Left ventricle myocardium superior (tissue), 1 donor: ENCODE measurements at regions of chr6 and their contacts with region 1.

Region 1: GRCh38 chr6:47413752-47414422 is 63.7 kb upstream of the CD2AP start:
- DNase-seq: no peak
- ATAC-seq: peak; percentile 87

Region 2: DNA sequence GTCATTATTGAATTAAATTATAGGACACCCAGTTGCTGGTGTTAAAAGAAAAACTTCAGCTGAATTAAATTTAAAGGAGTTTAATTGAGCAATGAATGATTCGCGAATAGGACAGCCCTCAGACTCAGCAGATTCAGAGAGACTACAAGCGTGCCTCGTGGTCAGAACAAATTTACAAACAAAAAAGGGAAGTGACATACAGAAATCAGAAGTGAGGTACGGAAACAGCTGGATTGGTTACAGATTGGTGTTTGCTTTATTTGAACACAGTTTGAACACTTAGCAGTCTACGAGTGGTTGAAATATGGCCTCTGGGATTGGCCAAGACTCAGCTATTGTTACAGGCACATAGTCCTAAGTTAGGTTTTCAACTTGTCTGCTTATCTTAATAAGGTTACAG is 78.4 kb before region 1 on chr6:
- intact Hi-C with region 1: no loop called
- DNase-seq: no peak
- ATAC-seq: no peak

Region 3: DNA sequence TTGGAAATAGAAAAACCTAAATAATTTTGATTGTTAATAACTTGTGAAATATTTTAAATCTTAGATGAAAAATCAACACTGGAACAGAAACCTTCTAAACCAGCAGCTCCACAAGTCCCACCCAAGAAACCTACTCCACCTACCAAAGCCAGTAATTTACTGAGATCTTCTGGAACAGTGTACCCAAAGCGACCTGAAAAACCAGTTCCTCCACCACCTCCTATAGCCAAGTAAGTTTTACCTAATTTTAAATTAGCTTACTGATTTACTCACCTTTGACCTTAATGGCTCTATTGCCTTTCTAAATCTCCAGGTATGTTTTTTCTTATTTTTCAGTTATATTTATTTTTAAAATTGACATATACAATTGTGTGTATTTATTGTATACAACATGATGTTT is 181.9 kb after region 1 on chr6:
- intact Hi-C with region 1: loop called (anchors 10 kb)
- DNase-seq: no peak
- ATAC-seq: no peak

Region 4: GRCh38 chr6:47780510-47781356 is 366.8 kb after region 1 on chr6:
- intact Hi-C with region 1: loop called (anchors 2 kb)
- DNase-seq: peak; percentile 33
- ATAC-seq: peak; percentile 79